ENCODE measurements at regions of chr2 and their contacts with region 1.

Region 1: GRCh38 chr2:69509007-69509749 is 71.9 kb upstream of the NFU1 start:
- DNase-seq: no peak
- ATAC-seq: no peak
- H3K4me3 ChIP-seq: no peak overlapping the region
- H3K27ac ChIP-seq: no peak overlapping the region
- H3K4me1 ChIP-seq: no peaks in the 10 kb centered on the region
- H3K27me3 ChIP-seq: no peaks in the 10 kb centered on the region
- CTCF ChIP-seq: no peak

Region 2: GRCh38 chr2:67666386-67667053 is 1842.7 kb before region 1 on chr2:
- CTCF ChIA-PET with region 1: no interaction called
- POLR2A ChIA-PET with region 1: no interaction called
- in situ Hi-C with region 1: no loop called
- intact Hi-C with region 1: loop called (anchors 10 kb)
- DNase-seq: no peak
- ATAC-seq: no peak
- H3K4me3 ChIP-seq: no peak overlapping the region
- H3K27ac ChIP-seq: no peak overlapping the region
- H3K4me1 ChIP-seq: no peaks in the 10 kb centered on the region
- H3K27me3 ChIP-seq: no peaks in the 10 kb centered on the region
- CTCF ChIP-seq: no peak

Measured in Panc1 (cell line).